ENCODE measurements at regions of chr9 and their contacts with region 1.

Region 1: GRCh38 chr9:69971643-69972449 is 71.8 kb upstream of the MAMDC2 start:
- DNase-seq: peak; percentile 86
- H3K27ac ChIP-seq: no peak overlapping the region
- CTCF ChIP-seq: peak; percentile 88

Region 2: DNA sequence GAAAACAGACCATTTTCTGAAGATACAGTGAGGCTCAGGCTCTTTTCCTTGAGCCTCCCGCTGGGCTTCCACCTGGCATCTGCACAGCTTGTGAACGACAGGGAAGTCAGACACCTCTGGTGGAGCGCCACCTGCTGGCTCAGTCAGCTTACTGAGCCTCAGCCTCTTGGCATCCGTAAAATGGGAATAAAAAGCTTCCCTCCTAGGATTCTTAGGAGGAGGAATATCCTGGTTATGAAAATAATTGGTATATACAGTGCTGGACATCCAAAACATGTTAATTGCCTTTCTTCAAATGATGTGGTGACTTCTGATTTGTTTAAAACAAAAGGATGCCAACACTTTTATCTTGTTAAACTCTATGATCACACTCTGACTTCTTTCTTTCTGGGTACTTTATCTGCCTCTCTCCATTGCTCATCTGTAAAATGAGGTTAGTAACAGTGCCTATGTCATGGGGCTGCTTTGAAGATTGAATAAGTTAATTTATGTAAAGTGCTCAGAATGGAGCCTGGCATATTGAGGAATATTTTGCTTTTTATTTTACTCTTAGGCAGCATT is 139.3 kb after region 1 on chr9:
- CTCF ChIA-PET with region 1: interaction called, 81 read pairs
- POLR2A ChIA-PET with region 1: no interaction called
- DNase-seq: peak; percentile 62
- H3K27ac ChIP-seq: no peak overlapping the region
- CTCF ChIP-seq: peak; percentile 77

Region 3: DNA sequence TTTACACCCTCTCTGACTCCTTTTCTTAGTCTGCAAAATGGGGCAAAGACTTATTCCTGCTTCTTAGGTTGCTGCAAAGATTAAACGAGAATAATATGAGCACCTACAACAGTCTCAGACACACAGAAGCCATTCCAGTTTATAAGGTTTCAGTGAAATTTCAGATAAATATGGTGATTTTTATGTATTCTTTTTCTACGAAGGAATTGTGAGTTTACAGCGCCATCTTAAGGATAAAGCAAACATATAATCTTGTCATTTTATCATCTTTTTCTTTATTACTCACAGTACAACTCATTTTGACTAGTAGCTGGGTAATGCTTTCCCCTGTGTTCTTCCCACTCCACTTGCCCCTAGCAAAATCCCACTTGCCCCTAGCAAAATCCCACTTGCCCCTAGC is 257.7 kb after region 1 on chr9:
- CTCF ChIA-PET with region 1: interaction called, 13 read pairs
- POLR2A ChIA-PET with region 1: no interaction called
- DNase-seq: no peak
- H3K27ac ChIP-seq: no peak overlapping the region
- CTCF ChIP-seq: no peak